Gastrocnemius medialis (tissue), 4 donors: ENCODE measurements at regions of chr1 and their contacts with region 1.

Region 1: GRCh38 chr1:56644919-56645676 is at the start of gene PRKAA2:
- DNase-seq: peak; percentile 18 to 53
- ATAC-seq: peak; percentile 62 to 65
- H3K4me3 ChIP-seq: peak within 1 kb of the TSS; percentile 66 to 82 (median 68)
- H3K27ac ChIP-seq: peak within 1 kb of the TSS; percentile 87 to 94 (median 90)
- H3K4me1 ChIP-seq: peaks cover 20 to 25% of the 10 kb centered on the region in 2 donors
- H3K27me3 ChIP-seq: no peaks in the 10 kb centered on the region
- CTCF ChIP-seq: no peak
- POLR2A ChIP-seq: peak; percentile 62 to 66
- total RNA-seq, gene PRKAA2: 24.6 to 78.6 (median 70.9) TPM

Region 2: GRCh38 chr1:56357927-56358690 is 287.0 kb before region 1 on chr1:
- in situ Hi-C with region 1: no loop called
- intact Hi-C with region 1: loop called (anchors 5 kb)
- DNase-seq: no peak
- ATAC-seq: no peak
- H3K4me3 ChIP-seq: no peak overlapping the region
- H3K27ac ChIP-seq: peak overlapping the region; percentile 73 to 92 (median 82)
- H3K4me1 ChIP-seq: peaks cover 50 to 54% of the 10 kb centered on the region in 2 donors
- H3K27me3 ChIP-seq: no peaks in the 10 kb centered on the region
- CTCF ChIP-seq: no peak
- POLR2A ChIP-seq: no peak

Region 3: GRCh38 chr1:56798053-56798471 is 153.0 kb after region 1 on chr1:
- in situ Hi-C with region 1: no loop called
- intact Hi-C with region 1: loop called (anchors 5 kb)
- DNase-seq: no peak
- ATAC-seq: peak; percentile 72 to 79
- H3K4me3 ChIP-seq: no peak overlapping the region
- H3K27ac ChIP-seq: peak overlapping the region; percentile 66 to 88 (median 74)
- H3K4me1 ChIP-seq: peaks cover 28 to 31% of the 10 kb centered on the region in 2 donors
- H3K27me3 ChIP-seq: no peaks in the 10 kb centered on the region
- CTCF ChIP-seq: no peak
- POLR2A ChIP-seq: no peak